ENCODE measurements at regions of chr7 and their contacts with region 1.

Region 1: DNA sequence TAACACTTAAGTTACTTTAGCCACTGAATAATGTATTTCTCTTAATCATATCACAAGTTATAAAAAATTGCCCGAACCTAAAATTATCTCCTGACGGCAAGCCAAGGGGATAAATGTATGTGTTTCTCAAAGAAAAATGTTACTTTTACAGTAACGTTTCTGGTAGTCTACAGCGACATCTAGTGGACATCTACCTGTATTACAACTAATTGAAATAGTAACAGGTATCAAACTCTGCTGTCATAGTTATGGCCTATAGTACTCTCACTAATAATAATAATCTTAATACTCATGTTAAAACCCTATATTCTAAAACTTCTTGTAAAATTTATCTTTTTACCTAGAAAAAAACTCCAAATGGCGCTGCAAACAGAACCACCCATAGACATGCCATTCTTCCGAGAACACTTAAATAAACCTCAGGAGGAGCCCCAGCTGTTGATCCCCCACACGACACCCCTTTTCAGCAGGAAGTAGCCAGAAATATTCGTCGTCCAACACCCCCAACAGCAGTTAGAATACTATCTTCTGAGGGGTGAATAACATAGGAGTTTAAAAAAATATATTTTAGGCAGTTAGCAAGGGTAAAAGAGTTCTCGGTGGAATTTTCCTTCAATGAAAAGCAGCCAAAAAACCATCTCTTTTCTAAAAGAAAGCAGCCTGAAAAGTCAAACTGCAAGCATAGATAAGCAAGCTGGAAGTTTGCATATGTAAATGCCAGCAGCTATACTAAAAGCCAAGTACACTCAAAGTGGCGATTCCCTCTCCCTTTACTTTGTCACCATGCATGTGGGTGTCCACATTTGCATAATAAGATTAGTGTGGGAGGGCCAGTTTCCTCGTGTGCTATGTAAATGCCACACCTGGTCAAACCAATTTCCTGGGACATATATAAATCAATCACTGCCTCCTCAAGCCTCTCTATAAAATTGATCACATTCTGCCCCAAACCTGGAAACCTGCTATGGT is 40.5 kb upstream of the ZNF107 start:
- DNase-seq: no peak
- ATAC-seq: no peak
- H3K4me3 ChIP-seq: no peak overlapping the region
- H3K27ac ChIP-seq: no peak overlapping the region
- H3K4me1 ChIP-seq: no peaks in the 10 kb centered on the region
- H3K27me3 ChIP-seq: no peaks in the 10 kb centered on the region
- CTCF ChIP-seq: peak; percentile 57 to 78 (median 60)
- POLR2A ChIP-seq: no peak

Region 2: DNA sequence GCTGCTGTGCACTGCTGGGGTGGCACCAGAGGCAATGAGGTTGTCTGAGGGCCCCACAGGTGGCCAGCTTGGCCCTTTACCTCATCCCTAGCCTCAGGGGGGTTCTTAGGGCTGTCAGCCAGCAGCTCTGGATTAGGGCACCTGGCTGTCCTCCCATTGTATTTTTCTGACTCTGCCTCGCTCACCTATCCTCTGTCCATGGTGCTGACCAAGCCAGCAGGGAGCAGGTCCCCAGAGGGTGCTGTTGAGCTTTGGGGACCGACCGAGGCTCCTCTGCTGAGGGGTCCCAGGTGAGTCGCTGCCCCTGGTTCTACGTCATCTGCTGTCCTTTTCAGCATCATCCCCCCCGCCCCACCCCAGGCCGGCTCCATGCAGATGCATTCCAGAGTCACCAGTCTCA is 450.5 kb before region 1 on chr7:
- in situ Hi-C with region 1: loop called (anchors 10 to 25 kb)
- intact Hi-C with region 1: no loop called
- DNase-seq: no peak
- ATAC-seq: no peak
- H3K4me3 ChIP-seq: no peak overlapping the region
- H3K27ac ChIP-seq: no peak overlapping the region
- H3K4me1 ChIP-seq: no peaks in the 10 kb centered on the region
- H3K27me3 ChIP-seq: no peaks in the 10 kb centered on the region
- CTCF ChIP-seq: no peak
- POLR2A ChIP-seq: no peak

Region 3: DNA sequence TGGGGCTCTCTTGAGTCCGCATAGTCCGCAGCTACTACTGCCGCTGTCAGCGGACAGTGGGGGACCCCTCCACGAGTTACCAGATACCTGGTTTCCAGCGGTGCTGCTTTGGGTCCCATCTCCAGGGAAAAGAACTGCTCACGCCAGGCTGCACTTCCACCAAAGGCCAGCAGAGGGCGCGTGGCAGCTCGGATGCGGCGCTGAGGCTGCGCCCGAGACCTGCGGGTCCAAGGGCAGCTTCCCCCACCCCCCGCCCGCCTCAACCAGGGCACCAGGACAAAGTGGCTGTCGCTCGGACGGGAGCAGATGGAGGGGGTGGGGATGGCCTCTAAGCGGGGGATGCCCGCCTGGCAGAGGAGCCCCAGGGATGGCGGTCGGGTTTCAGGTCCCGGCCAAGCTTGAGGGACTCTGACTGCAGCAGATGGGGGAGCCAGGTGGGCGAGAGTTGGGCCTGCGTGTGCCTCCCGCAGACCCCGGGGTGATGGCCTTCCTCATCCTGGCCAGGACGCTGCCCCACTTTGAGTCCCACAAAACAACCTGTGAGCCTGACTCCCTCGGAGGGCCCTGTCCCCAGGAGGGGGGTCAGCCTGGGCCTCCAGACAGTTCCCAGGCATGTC is 442.2 kb before region 1 on chr7:
- in situ Hi-C with region 1: loop called (anchors 10 to 25 kb)
- intact Hi-C with region 1: no loop called
- DNase-seq: no peak
- ATAC-seq: no peak
- H3K4me3 ChIP-seq: no peak overlapping the region
- H3K27ac ChIP-seq: no peak overlapping the region
- H3K4me1 ChIP-seq: no peaks in the 10 kb centered on the region
- H3K27me3 ChIP-seq: peaks cover 0 to 11% (median 5%) of the 10 kb centered on the region in 3 donors
- CTCF ChIP-seq: peak; percentile 43 to 72 (median 62)
- POLR2A ChIP-seq: no peak

Measured in gastrocnemius medialis (tissue), 4 donors.